Activated CD4-positive, alpha-beta T cell treated with anti-CD3 and anti-CD28 coated beads, Interleukin-2, amount 10 ng/mL, durations not matched to agents 24 days and 14 days (primary cell): ENCODE measurements at regions of chrX and their contacts with region 1.

Region 1: DNA sequence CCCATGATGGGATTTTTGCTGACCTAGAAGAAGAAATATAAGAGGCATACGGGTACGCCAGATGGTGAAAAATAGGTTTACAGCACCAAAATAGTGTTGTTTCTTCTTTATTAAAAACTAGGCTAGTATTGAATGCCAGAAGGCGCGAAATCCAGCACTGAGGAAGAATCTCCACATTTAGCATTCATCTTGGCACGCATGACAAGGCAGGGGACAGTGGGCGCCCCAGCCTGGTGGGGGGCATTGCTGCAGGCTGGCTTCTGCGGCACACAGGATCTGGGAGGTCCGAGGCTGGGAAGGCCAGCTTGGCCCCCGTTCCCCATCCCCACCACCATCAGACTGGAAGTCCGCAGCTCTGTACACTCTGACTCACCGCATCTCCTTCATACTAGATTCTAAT is 75.7 kb upstream of the DDX3X start:
- DNase-seq: no peak
- H3K4me3 Mint-ChIP-seq: no peak overlapping the region
- H3K27ac Mint-ChIP-seq: no peak overlapping the region
- H3K4me1 Mint-ChIP-seq: no peaks in the 10 kb centered on the region
- H3K27me3 Mint-ChIP-seq: peaks cover 2% of the 10 kb centered on the region

Region 2: GRCh38 chrX:41180194-41180908 is 77.9 kb before region 1 on chrX:
- intact Hi-C with region 1: loop called (anchors 1 kb)
- DNase-seq: peak; percentile 83
- H3K4me3 Mint-ChIP-seq: peak overlapping the region; percentile 34
- H3K27ac Mint-ChIP-seq: peak overlapping the region; percentile 83
- H3K4me1 Mint-ChIP-seq: peaks cover 30% of the 10 kb centered on the region
- H3K27me3 Mint-ChIP-seq: no peaks in the 10 kb centered on the region

Region 3: GRCh38 chrX:41332408-41333002 is 74.3 kb after region 1 on chrX:
- intact Hi-C with region 1: no loop called
- DNase-seq: peak; percentile 81
- H3K4me3 Mint-ChIP-seq: peak overlapping the region; percentile 98
- H3K27ac Mint-ChIP-seq: peak overlapping the region; percentile 100
- H3K4me1 Mint-ChIP-seq: peaks cover 18% of the 10 kb centered on the region
- H3K27me3 Mint-ChIP-seq: no peaks in the 10 kb centered on the region

Region 4: GRCh38 chrX:41561045-41561444 is 302.8 kb after region 1 on chrX:
- intact Hi-C with region 1: no loop called
- DNase-seq: peak; percentile 78
- H3K4me3 Mint-ChIP-seq: peak overlapping the region; percentile 8
- H3K27ac Mint-ChIP-seq: peak overlapping the region; percentile 64
- H3K4me1 Mint-ChIP-seq: peaks cover 26% of the 10 kb centered on the region
- H3K27me3 Mint-ChIP-seq: no peaks in the 10 kb centered on the region

Region 5: DNA sequence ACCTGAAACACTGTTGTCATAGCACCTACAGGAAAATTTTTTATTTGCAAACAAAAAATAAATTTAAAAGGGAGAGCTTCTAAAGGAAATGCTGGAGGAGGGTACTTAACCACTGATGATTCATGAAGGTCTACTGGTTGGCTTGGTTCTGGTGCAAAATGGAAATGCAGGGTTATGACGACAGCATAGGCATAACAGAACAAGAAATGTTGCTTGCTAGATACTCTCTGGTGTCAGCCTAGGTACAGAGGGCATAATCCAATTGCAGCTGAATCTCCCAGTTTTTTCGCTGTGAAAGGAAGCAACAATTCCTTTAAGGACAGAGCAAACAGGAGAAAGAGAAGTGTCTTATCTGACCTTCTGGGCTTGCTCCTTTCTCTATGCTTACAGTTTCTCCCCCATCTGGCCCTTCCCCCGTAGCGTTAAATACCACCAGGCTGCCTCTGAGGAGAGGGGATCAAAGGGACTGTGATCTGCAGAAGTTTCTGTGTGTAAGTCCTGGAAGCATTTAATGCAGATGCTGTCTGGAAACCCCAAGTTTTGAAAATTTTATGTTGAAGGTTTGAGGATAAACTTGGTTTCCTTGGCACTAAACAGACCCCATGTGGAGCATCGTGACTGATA is 688.9 kb after region 1 on chrX:
- intact Hi-C with region 1: no loop called
- DNase-seq: no peak
- H3K4me3 Mint-ChIP-seq: no peak overlapping the region
- H3K27ac Mint-ChIP-seq: no peak overlapping the region
- H3K4me1 Mint-ChIP-seq: no peaks in the 10 kb centered on the region
- H3K27me3 Mint-ChIP-seq: no peaks in the 10 kb centered on the region